IMR-90 (cell line): ENCODE measurements at regions of chr15 and their contacts with region 1.

Region 1: GRCh38 chr15:76376029-76376428 is 39.5 kb downstream of the ISL2 start:
- DNase-seq: no peak
- ATAC-seq: no peak
- H3K4me3 ChIP-seq: no peak overlapping the region
- H3K27ac ChIP-seq: no peak overlapping the region
- H3K4me1 ChIP-seq: no peaks in the 10 kb centered on the region; the same call in 1 of the 2 replicates
- H3K27me3 ChIP-seq: no peaks in the 10 kb centered on the region
- CTCF ChIP-seq: no peak
- POLR2A ChIP-seq: no peak
- RAD21 ChIP-seq: no peak

Region 2: DNA sequence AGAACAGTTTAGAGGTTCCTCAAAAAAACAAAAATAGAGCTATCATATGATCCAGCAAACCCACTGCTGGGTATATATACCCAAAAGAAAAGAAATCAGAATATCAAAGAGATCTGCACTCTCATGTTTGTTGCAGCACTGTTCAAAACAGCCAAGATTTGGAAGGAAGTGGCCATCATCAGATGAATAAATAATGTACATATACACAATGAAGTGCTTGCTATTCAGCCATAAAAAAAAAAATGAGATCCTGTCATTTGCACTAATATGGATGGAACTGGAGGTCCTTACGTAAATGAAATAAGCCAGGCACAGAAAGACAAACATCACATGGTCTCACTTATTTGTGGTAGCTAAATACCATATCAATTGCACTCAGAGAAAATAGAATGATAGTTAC is 470.8 kb after region 1 on chr15:
- CTCF ChIA-PET with region 1: interaction called, 11 read pairs
- POLR2A ChIA-PET with region 1: no interaction called
- dilution Hi-C with region 1: no loop called
- in situ Hi-C with region 1: no loop called
- intact Hi-C with region 1: no loop called
- DNase-seq: no peak
- ATAC-seq: no peak
- H3K4me3 ChIP-seq: no peak overlapping the region
- H3K27ac ChIP-seq: no peak overlapping the region
- H3K4me1 ChIP-seq: no peaks in the 10 kb centered on the region
- H3K27me3 ChIP-seq: no peaks in the 10 kb centered on the region
- CTCF ChIP-seq: no peak
- POLR2A ChIP-seq: no peak
- RAD21 ChIP-seq: no peak